GM13977 (cell line): ENCODE measurements at regions of chr21 and their contacts with region 1.

Region 1: DNA sequence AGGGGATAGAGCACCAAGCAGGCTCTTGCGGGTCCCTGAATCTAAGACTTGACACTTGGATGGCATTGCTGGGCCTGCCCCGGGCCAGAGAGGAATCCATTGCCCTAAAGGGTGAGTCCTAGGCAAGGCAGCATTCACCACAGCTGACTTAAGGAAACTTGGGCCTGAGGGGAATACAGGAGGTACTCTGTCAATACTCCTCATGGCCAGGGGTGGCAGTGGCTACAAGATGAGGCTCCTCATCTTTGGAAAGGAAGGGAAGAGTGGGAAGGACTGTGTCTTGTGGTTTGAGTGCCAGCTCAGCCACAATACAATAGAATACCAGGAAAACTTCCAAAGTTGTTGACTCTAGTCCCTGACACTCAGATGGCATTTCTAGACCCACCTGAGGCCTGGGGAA is 5.1 kb downstream of the KRTAP22-1 start:
- DNase-seq: no peak
- CTCF ChIP-seq: no peak

Region 2: DNA sequence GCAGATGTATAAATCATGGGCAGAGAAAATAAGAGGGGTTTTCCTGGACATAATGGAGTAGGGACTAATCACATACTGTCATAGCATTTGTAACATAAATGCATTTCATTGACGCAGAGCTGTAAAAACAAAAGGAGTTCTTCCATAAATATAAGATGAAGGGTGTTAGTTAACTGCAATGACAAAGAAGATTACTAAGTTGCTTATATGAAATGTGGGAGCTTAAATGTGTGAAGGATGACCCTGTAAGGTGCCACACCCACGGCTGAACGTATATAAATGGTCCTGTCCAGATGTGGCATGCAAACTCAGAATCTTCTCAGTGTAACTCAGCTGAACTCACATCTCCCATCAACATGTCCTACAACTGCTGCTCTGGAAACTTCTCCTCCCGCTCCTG is 210.2 kb before region 1 on chr21 and contains the start of gene KRTAP13-1:
- in situ Hi-C with region 1: no loop called
- DNase-seq: no peak
- CTCF ChIP-seq: no peak

Region 3: DNA sequence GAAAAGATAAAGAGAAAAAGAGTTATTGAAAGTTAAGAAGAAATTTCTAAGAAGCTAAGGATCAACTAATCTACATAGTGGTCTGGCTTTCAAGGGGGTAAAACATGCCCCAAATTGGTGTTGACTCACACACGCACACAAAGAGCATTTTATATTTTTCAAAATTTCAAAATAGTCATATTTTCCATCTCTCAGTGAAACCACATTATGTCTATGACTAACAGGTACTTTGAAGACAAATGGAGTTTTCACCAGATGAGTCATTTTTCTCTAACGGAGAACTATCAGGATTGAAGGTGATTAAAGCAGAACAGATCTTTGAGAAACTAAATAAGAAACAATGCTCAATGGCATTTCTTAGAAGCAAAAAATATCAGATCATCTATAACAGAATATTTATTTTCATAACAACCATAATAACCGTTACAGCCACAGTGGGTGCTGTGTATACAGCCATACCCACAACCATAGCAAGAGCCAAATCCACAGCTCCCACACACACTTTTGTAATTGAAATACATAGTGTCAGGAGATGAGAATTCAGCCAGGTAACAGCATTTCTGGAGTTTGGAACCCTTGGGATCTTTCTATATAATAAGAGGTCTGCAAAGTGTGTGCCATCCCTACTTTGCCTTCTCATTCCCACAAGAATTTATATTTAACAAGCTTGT is 112.4 kb after region 1 on chr21 and contains the start of gene KRTAP21-3:
- in situ Hi-C with region 1: loop called (anchors 25 kb)
- DNase-seq: no peak
- CTCF ChIP-seq: no peak